Activated B cell treated with CpG ODN at 0.5 μM for 24 hours (primary cell): ENCODE measurements at regions of chr4 and their contacts with region 1.

Region 1: GRCh38 chr4:172061204-172061603 is 248.0 kb downstream of the GALNTL6 start:
- DNase-seq: no peak
- ATAC-seq: no peak
- H3K4me3 Mint-ChIP-seq: no peak overlapping the region
- H3K27ac Mint-ChIP-seq: no peak overlapping the region
- H3K4me1 Mint-ChIP-seq: no peaks in the 10 kb centered on the region
- H3K27me3 Mint-ChIP-seq: no peaks in the 10 kb centered on the region
- CTCF ChIP-seq: no peak

Region 2: GRCh38 chr4:171979461-171979860 is 81.7 kb before region 1 on chr4:
- CTCF ChIA-PET with region 1: no interaction called
- POLR2A ChIA-PET with region 1: no interaction called
- intact Hi-C with region 1: no loop called
- DNase-seq: no peak
- ATAC-seq: no peak
- H3K4me3 Mint-ChIP-seq: no peak overlapping the region
- H3K27ac Mint-ChIP-seq: no peak overlapping the region
- H3K4me1 Mint-ChIP-seq: no peaks in the 10 kb centered on the region
- H3K27me3 Mint-ChIP-seq: no peaks in the 10 kb centered on the region
- CTCF ChIP-seq: no peak

Region 3: DNA sequence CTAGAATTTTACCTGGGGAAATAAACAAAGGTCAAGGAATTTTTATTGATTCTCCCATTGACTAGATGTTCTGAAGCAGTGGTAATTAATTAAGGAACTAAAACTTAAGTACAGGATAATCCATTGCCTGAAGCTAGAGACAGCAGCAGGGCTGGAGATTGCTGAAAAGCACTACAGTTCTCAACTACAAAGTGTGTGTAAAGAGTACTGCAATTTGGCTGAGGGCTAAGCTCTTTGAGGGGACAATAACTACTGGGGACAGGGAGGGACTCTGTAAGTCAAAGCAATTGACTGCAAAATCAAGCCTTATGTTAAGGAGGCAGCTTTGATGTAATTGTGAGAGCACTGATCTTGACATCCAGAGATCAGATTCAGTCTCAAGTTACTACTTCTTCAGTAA is 12.4 kb after region 1 on chr4:
- CTCF ChIA-PET with region 1: no interaction called
- POLR2A ChIA-PET with region 1: no interaction called
- intact Hi-C with region 1: loop called (anchors 1 kb)
- DNase-seq: no peak
- ATAC-seq: no peak
- H3K4me3 Mint-ChIP-seq: no peak overlapping the region
- H3K27ac Mint-ChIP-seq: no peak overlapping the region
- H3K4me1 Mint-ChIP-seq: no peaks in the 10 kb centered on the region
- H3K27me3 Mint-ChIP-seq: no peaks in the 10 kb centered on the region
- CTCF ChIP-seq: no peak